ENCODE measurements at regions of chr12 and their contacts with region 1.

Region 1: DNA sequence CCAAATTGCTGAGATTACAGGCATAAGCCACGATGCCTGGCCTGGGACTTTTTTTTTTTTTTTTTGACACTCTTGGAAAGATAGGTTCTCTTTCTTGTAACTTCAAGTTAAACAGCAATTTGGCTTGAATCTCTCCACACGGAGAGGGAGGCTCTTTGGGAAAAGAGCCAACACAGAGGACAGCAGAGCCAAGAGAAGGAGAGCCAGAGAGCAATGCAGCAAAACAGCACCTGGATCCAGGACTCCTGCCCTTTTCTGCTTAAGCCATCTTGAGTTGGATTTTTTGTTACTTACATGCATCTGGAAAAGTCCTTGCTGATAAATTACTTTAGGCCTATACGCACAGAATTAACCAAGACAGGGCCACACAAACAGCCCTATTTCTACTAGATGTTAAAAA is 176.8 kb downstream of the APAF1 start:
- DNase-seq: no peak
- H3K4me3 ChIP-seq: no peak overlapping the region
- H3K27ac ChIP-seq: no peak overlapping the region
- H3K4me1 ChIP-seq: no peaks in the 10 kb centered on the region
- H3K27me3 ChIP-seq: no peaks in the 10 kb centered on the region
- CTCF ChIP-seq: no peak

Region 2: GRCh38 chr12:98856897-98857540 is 35.2 kb after region 1 on chr12:
- intact Hi-C with region 1: loop called (anchors 1 kb)
- DNase-seq: no peak
- H3K4me3 ChIP-seq: no peak overlapping the region
- H3K27ac ChIP-seq: no peak overlapping the region
- H3K4me1 ChIP-seq: no peaks in the 10 kb centered on the region
- H3K27me3 ChIP-seq: no peaks in the 10 kb centered on the region
- CTCF ChIP-seq: no peak

Region 3: GRCh38 chr12:98968896-98969295 is 147.0 kb after region 1 on chr12:
- intact Hi-C with region 1: no loop called
- DNase-seq: no peak
- H3K4me3 ChIP-seq: no peak overlapping the region
- H3K27ac ChIP-seq: no peak overlapping the region
- H3K4me1 ChIP-seq: no peaks in the 10 kb centered on the region
- H3K27me3 ChIP-seq: no peaks in the 10 kb centered on the region
- CTCF ChIP-seq: no peak

Region 4: DNA sequence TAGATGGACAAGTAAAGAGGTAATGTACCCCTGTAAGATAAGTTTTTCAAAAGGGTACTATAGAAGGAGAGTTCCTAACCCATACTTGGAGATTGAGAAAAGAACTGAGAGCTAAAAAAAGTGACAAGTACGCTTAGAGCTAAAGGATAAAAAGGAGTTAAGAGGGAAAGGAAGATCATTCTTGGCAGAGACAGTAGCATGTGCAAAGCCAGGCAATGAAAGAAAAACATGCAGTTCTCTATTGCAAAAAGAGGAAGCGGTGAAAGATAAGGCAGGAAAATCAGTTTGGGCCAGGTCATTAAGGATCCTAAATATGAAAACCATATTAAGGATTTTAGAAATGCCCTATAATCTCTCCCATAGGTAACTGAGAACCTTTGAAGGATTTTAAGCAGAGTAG is 325.3 kb after region 1 on chr12:
- intact Hi-C with region 1: no loop called
- DNase-seq: no peak
- H3K4me3 ChIP-seq: no peak overlapping the region
- H3K27ac ChIP-seq: no peak overlapping the region
- H3K4me1 ChIP-seq: no peaks in the 10 kb centered on the region
- H3K27me3 ChIP-seq: no peaks in the 10 kb centered on the region
- CTCF ChIP-seq: no peak

Measured in ascending aorta (tissue), 2 donors.